ENCODE measurements at regions of chr1 and their contacts with region 1.

Region 1: DNA sequence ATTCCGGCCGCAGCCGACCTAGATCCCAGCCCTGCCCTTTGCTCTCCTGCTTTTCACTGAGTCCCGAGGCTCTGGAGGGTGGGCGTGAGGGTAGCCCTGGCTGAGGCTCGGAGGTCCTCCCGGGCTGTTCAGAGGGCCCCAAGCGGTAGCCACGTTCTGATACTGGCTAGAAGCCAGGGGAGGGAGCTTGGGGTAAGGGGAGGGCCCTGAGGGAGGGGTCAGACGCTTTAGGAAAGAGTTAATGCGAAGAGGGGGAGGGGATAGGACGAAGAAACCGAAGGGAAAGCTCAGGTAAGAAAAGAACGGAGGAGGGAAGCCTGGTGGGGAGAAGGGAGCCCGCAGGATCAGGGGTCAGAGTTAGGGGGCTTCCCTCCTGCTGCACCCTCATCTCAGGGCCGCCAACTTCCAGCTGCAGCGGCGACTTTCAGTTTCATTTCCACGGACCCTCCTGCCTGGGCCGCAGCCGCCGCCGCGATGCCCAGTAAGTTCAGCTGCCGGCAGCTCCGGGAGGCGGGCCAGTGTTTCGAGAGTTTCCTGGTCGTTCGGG is at the start of gene MOV10:
- DNase-seq: no peak
- H3K4me3 ChIP-seq: peak within 1 kb of the TSS; percentile 54
- H3K27me3 ChIP-seq: no peaks in the 10 kb centered on the region
- CTCF ChIP-seq: no peak
- polyA plus RNA-seq, gene MOV10: 48.9 and 93.7 TPM in 2 replicates

Region 2: GRCh38 chr1:112431038-112431437 is 243.5 kb before region 1 on chr1:
- CTCF ChIA-PET with region 1: no interaction called
- POLR2A ChIA-PET with region 1: no interaction called
- DNase-seq: no peak
- H3K4me3 ChIP-seq: no peak overlapping the region
- H3K27me3 ChIP-seq: no peaks in the 10 kb centered on the region
- CTCF ChIP-seq: no peak

Region 3: DNA sequence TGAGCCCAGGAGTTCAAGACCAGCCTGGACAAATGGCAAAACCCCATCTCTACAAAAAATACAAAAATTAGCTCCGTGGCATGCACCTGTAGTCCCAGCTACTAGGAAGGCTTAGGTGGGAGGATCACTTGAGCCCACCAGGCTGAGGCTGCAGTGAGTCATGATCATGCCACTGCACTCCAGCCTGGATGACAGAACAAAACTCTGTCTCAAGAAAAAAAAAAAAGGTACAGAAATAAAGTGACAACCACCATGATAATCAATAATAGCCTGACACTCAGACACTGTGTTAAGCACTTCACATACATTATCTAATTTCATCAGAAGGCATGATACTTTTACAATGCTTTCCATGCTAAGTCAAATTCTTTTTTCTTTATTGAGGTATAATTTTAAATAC is 108.7 kb before region 1 on chr1:
- CTCF ChIA-PET with region 1: no interaction called
- POLR2A ChIA-PET with region 1: no interaction called
- DNase-seq: no peak
- H3K4me3 ChIP-seq: no peak overlapping the region
- H3K27me3 ChIP-seq: no peaks in the 10 kb centered on the region
- CTCF ChIP-seq: no peak

Region 4: DNA sequence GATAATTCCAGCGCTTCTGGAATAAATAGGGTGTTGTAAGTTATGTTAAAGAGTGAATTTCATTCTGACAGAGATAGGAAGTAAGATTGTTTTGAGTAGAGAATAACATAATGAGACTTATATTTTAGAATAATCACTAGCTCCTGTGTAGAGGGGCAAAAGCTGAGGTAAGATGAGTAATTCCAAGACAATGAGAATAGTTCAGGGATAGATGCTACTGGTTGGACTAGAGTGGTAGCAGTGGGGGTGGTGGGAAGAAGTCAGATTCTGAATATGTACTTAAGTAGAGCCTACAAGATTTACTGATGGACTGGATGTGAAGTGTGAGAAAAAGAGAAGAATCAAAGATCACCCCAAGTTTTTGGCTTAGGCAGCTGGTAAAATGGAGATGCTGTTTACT is 23.3 kb before region 1 on chr1:
- CTCF ChIA-PET with region 1: interaction called, 26 read pairs
- POLR2A ChIA-PET with region 1: no interaction called
- DNase-seq: no peak
- H3K4me3 ChIP-seq: no peak overlapping the region
- H3K27me3 ChIP-seq: no peaks in the 10 kb centered on the region
- CTCF ChIP-seq: no peak

Region 5: DNA sequence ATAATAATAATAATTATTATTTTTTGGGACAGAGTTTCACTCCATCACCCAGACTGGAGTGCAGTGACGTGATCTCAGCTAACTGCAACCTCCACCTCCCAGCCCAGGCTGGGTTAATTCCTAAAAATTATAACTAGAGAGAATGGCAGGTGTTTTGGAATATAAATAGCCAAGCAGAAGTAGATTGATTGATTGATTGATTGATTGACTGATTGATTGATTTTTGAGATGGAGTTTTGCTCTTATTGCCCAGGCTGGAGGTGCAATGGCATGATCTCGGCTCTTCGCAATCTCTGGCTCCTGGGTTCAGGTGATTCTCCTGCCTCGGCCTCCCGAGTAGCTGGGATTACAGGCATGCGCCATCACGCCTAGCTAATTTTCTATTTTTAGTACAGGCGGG is 14.4 kb before region 1 on chr1:
- CTCF ChIA-PET with region 1: interaction called, 46 read pairs
- POLR2A ChIA-PET with region 1: no interaction called
- DNase-seq: no peak
- H3K4me3 ChIP-seq: no peak overlapping the region
- H3K27me3 ChIP-seq: no peaks in the 10 kb centered on the region
- CTCF ChIP-seq: no peak

Region 6: GRCh38 chr1:112706908-112707663 is 32.6 kb after region 1 on chr1 and contains the start of gene RHOC:
- CTCF ChIA-PET with region 1: interaction called, 15 read pairs
- POLR2A ChIA-PET with region 1: interaction called, 4 read pairs
- DNase-seq: no peak
- H3K4me3 ChIP-seq: peak within 1 kb of the TSS; percentile 70
- H3K27me3 ChIP-seq: no peaks in the 10 kb centered on the region
- CTCF ChIP-seq: peak; percentile 98
- polyA plus RNA-seq, gene RHOC: 1,093 and 1,537 TPM in 2 replicates